Left ventricle myocardium superior (tissue), 1 donor: ENCODE measurements at regions of chr17 and their contacts with region 1.

Region 1: GRCh38 chr17:68777243-68777855 is 176.2 kb upstream of the FAM20A start:
- DNase-seq: peak; percentile 54
- ATAC-seq: peak; percentile 81

Region 2: GRCh38 chr17:68731465-68731864 is 45.9 kb before region 1 on chr17:
- intact Hi-C with region 1: no loop called
- DNase-seq: no peak
- ATAC-seq: no peak

Region 3: DNA sequence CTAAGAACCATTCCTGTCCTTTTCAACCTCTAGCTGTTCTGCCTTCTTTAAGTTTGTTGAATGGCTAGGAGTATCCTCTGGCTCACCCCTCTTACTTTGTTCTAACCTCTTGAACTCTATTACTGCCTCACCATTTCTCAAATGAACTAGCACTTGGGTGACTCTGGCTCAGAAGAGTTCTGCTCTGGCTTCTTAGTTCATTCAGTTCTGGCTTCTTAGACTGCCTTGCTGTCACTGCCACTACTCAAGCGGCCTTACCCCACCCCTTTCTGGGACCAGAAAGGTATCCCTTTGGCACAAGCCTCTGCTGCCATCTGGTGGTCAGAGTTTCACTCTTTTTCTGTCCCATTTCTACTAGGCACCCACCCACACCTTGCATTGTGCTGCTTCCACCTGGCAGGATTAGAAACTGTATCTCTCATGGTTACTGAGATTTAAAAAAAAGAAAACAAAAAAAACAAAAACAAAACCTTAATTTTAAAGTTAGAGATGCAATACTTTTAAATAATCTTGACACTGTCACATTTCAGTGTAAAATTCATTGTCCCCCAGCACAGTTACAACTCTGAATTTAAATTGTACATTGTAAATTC is 458.1 kb after region 1 on chr17:
- intact Hi-C with region 1: loop called (anchors 5 kb)
- DNase-seq: peak; percentile 69
- ATAC-seq: peak; percentile 91